Dorsolateral prefrontal cortex (tissue), 120 donors: ENCODE measurements at regions of chr1 and their contacts with region 1.

Region 1: GRCh38 chr1:66725885-66726665 is 26.2 kb upstream of the DYNLT5 start:
- DNase-seq: peak in 6 of 10 donors; percentile 10 to 41 (median 30)
- H3K4me3 ChIP-seq: no peak overlapping the region
- H3K27ac ChIP-seq: peak overlapping the region in 27 of 59 donors; percentile 2 to 63 (median 31)
- H3K27me3 ChIP-seq: no peaks in the 10 kb centered on the region
- CTCF ChIP-seq: peak; percentile 72 to 98 (median 92)

Region 2: DNA sequence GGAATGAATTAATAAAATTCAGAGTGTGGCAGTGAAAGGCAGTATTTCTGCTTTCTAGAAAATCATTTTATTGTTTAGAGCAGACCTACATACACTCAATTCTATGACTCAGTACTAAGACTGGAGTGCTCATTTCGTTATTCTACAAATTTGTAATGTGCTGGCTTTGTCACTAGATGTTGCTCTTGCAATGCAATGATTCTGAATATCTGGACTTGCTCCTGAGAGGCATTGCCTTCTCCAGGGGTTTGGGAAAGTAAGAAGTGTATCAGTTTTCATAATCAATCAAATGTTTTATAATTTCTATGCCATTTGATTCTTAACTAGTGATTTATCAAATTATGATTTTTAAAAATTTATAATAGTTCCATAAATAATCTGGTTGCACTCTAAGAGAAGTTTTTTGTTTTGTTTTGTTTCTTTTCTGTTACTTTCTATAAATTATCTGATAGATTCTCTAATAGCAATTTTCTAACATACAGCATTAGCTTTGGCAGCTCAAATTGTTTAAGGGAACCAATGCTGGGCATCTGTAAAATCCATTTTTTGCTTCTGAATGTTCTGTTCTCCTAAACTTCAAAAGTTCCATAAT is 472.6 kb before region 1 on chr1:
- intact Hi-C with region 1: loop called in 1 of 2 experiments (anchors 10 kb)
- DNase-seq: no peak
- H3K4me3 ChIP-seq: no peak overlapping the region
- H3K27ac ChIP-seq: peak overlapping the region in 44 of 59 donors; percentile 4 to 96 (median 46)
- H3K27me3 ChIP-seq: no peaks in the 10 kb centered on the region
- CTCF ChIP-seq: peak; percentile 43 to 96 (median 83)

Region 3: GRCh38 chr1:66452162-66452561 is 273.9 kb before region 1 on chr1:
- intact Hi-C with region 1: loop called in 1 of 2 experiments (anchors 5 kb)
- DNase-seq: no peak
- H3K4me3 ChIP-seq: no peak overlapping the region
- H3K27ac ChIP-seq: no peak overlapping the region
- H3K27me3 ChIP-seq: no peaks in the 10 kb centered on the region
- CTCF ChIP-seq: peak in 2 of 56 donors; percentile 11 to 16

Region 4: GRCh38 chr1:66542811-66543767 is 183.0 kb before region 1 on chr1:
- intact Hi-C with region 1: loop called (anchors 5 to 10 kb)
- DNase-seq: peak; percentile 3 to 84 (median 48)
- H3K4me3 ChIP-seq: peak overlapping the region in 24 of 59 donors; percentile 0 to 32 (median 10)
- H3K27ac ChIP-seq: peak overlapping the region in 58 of 59 donors; percentile 11 to 90 (median 82)
- H3K27me3 ChIP-seq: no peaks in the 10 kb centered on the region
- CTCF ChIP-seq: peak in 1 of 56 donors; percentile 11

Region 5: GRCh38 chr1:66648901-66649595 is 77.0 kb before region 1 on chr1:
- intact Hi-C with region 1: loop called in 1 of 2 experiments (anchors 10 kb)
- DNase-seq: no peak
- H3K4me3 ChIP-seq: no peak overlapping the region
- H3K27ac ChIP-seq: no peak overlapping the region
- H3K27me3 ChIP-seq: no peaks in the 10 kb centered on the region
- CTCF ChIP-seq: no peak

Region 6: GRCh38 chr1:66663730-66664129 is 62.3 kb before region 1 on chr1:
- intact Hi-C with region 1: no loop called
- DNase-seq: no peak
- H3K4me3 ChIP-seq: no peak overlapping the region
- H3K27ac ChIP-seq: peak overlapping the region in 1 of 59 donors; percentile 17
- H3K27me3 ChIP-seq: no peaks in the 10 kb centered on the region
- CTCF ChIP-seq: no peak